ENCODE measurements at regions of chr13 and their contacts with region 1.

Region 1: GRCh38 chr13:30132623-30133553 is 174.5 kb downstream of the KATNAL1 start:
- DNase-seq: peak; percentile 98
- ATAC-seq: peak; percentile 99
- H3K4me3 Mint-ChIP-seq: no peak overlapping the region
- H3K27ac Mint-ChIP-seq: peak overlapping the region; percentile 71
- H3K4me1 Mint-ChIP-seq: peaks cover 15% of the 10 kb centered on the region
- H3K27me3 Mint-ChIP-seq: no peaks in the 10 kb centered on the region

Region 2: DNA sequence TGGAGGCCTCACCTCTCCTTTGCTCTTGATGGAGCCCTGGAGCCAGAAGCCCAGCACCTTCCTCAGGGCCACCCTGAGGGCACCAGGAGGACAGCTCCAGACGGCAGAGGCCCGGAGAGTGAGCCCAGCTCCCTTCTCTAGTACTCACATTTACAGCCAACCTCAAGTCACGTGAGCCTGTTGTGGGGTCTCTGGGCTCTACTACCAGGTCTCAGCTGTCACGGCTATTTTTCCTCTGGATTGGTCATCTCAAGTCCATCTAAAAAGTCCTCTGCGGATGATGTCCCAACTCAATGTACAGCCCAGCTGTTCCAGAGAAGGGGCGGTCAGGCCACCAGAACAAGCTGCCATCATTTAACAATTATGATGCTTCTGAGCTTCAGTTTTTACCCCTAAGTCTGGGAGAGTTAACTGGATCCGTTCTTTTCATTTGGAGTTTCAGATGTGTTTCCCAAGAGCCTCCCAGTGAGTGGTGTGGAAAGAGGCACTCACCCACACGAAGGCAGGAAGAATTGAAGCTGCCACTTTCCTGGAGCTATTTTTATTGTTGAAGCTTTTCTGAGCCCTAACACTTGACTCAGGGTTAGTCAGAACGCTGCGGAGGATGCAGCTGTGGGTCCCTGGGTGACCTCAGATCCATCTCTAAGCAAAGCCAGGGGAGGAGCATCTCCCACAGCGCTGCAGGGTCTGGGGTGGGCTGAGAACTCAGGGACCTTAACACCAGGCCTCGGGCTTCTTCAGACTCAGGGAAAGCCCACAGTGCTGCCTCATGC is 139.0 kb before region 1 on chr13:
- CTCF ChIA-PET with region 1: no interaction called
- DNase-seq: no peak
- ATAC-seq: peak; percentile 45
- H3K4me3 Mint-ChIP-seq: no peak overlapping the region
- H3K27ac Mint-ChIP-seq: no peak overlapping the region
- H3K4me1 Mint-ChIP-seq: peaks cover 2% of the 10 kb centered on the region
- H3K27me3 Mint-ChIP-seq: no peaks in the 10 kb centered on the region

Region 3: DNA sequence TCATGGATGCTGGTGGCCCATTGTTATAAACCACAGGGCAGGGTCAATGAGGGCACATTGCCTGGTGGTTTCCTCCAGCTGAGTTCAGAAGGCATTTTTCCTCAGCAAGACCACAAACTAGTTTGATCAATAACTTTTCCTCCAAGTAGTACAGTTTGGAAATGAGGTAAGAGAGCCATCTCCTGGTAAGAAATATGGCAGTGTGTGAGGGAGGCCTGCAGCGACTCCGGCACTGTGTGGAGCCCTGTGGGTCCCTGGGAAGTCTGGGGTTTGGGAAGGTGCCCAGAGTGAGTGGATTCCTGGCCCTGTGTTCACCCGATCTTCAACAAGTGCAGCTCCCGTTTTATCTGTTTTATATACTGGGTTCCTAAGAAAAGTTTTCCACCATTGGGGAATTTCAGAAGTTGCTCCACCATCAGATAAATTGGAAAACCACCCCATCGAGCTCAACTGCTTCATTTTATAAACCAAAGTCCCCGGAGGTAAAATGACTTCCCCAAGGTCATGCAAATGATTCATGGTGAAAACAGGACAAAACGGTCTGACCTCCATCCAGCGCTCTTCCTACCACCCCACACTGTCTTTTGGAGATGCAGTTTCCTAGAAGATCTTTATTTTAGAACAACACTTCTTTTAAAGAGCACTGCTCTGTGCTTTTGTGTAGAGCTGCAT is 26.0 kb after region 1 on chr13:
- CTCF ChIA-PET with region 1: interaction called, 185 read pairs
- DNase-seq: no peak
- ATAC-seq: peak; percentile 52
- H3K4me3 Mint-ChIP-seq: no peak overlapping the region
- H3K27ac Mint-ChIP-seq: peak overlapping the region; percentile 24
- H3K4me1 Mint-ChIP-seq: peaks cover 37% of the 10 kb centered on the region
- H3K27me3 Mint-ChIP-seq: no peaks in the 10 kb centered on the region

Region 4: GRCh38 chr13:30334663-30335386 is 201.9 kb after region 1 on chr13:
- CTCF ChIA-PET with region 1: interaction called, 15 read pairs
- DNase-seq: no peak
- ATAC-seq: peak; percentile 63
- H3K4me3 Mint-ChIP-seq: no peak overlapping the region
- H3K27ac Mint-ChIP-seq: no peak overlapping the region
- H3K4me1 Mint-ChIP-seq: peaks cover 4% of the 10 kb centered on the region
- H3K27me3 Mint-ChIP-seq: no peaks in the 10 kb centered on the region

Region 5: GRCh38 chr13:30371649-30372265 is 238.9 kb after region 1 on chr13:
- CTCF ChIA-PET with region 1: interaction called, 10 read pairs
- DNase-seq: peak; percentile 89
- ATAC-seq: peak; percentile 40
- H3K4me3 Mint-ChIP-seq: peak overlapping the region; percentile 76
- H3K27ac Mint-ChIP-seq: peak overlapping the region; percentile 91
- H3K4me1 Mint-ChIP-seq: peaks cover 76% of the 10 kb centered on the region
- H3K27me3 Mint-ChIP-seq: no peaks in the 10 kb centered on the region

Region 6: DNA sequence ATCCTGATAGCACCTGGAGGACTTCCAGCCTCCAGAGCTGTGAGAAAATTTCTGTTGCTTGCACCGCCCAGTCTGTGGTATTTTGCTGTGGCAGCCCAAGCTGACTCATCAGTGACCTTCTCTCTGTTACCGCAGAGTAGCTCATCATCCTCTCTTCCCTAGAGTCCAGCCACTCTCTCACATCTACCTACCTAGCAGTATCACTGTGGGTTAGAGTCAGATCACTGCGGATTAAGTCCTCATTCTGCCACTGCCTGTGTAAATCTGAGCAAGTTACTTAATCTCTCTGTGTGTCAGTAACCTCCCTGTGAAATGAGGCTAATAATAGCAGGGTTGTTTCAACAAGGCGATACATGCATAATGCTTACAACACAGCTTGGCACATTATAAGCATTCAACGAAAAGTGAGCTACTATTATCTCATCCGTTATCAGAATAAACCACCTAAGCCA is 444.5 kb after region 1 on chr13:
- CTCF ChIA-PET with region 1: interaction called, 27 read pairs
- DNase-seq: peak; percentile 87
- ATAC-seq: peak; percentile 78
- H3K4me3 Mint-ChIP-seq: peak overlapping the region; percentile 23
- H3K27ac Mint-ChIP-seq: no peak overlapping the region
- H3K4me1 Mint-ChIP-seq: peaks cover 33% of the 10 kb centered on the region
- H3K27me3 Mint-ChIP-seq: peaks cover 20% of the 10 kb centered on the region

Region 7: GRCh38 chr13:30647824-30648521 is 515.1 kb after region 1 on chr13:
- CTCF ChIA-PET with region 1: no interaction called
- DNase-seq: no peak
- ATAC-seq: no peak
- H3K4me3 Mint-ChIP-seq: no peak overlapping the region
- H3K27ac Mint-ChIP-seq: no peak overlapping the region
- H3K4me1 Mint-ChIP-seq: peaks cover 22% of the 10 kb centered on the region
- H3K27me3 Mint-ChIP-seq: no peaks in the 10 kb centered on the region